Right ventricle myocardium inferior (tissue), 1 donor: ENCODE measurements at regions of chr9 and their contacts with region 1.

Region 1: DNA sequence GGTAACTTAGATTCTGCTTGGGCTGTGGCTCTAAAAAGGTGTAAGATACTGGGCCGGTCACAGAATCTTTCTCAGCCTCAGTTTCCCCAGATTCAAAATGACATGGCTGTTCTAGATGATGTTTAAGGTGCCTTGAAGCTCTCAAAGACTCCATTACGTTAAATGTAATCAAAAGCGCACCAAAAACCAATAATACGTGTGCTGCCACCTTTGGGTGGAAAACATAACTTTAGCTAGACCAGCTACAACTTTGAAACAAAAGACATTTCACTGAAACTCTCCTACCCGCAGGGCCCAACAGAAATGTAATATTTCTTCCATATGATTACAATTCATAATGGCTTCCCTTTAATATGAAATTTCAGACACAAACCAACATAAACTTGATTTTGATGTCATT is 35.0 kb upstream of the PCSK5 start:
- DNase-seq: no peak
- ATAC-seq: peak; percentile 34

Region 2: DNA sequence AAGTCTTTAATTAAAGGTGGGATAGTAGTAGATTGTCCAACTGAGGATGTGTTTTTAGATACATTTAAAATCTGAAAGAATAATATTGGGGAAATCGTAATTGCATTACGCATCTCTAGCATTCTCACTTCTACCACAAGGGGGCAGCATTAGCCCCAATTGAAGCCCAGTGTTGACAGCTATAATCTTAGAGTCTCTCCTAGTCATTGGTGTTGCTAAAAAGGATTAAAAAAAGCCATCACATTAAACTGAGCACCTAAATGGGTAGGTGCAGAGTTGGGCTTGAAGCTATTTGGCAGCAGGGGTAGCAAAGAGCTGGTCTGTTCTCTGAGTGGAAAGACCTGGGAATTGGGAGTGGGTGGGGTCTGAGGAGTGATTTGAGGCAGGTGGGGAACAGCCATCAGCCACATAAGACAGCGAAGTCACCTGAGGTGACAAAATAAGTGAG is 590.0 kb before region 1 on chr9:
- intact Hi-C with region 1: loop called (anchors 5 kb)
- DNase-seq: no peak
- ATAC-seq: no peak

Region 3: DNA sequence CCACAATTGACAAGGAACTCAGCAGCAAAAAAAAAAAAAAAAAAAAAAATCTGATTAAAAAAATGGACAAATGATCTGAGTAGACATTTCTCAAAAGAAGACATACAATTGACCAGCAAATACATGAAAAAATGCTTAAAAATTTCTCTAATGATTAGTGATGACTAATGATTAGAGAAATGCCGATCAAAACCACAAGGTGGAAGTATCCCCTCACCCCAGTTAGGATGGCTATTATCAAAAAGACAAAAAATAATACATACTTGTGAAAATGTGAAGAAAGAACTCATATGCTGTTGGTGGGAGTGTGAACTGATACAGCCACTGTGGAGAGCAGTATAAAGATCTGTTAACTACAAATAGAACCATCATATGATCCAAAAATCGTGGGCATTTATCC is 521.9 kb before region 1 on chr9:
- intact Hi-C with region 1: loop called (anchors 5 kb)
- DNase-seq: no peak
- ATAC-seq: no peak

Region 4: GRCh38 chr9:75624998-75625397 is 230.5 kb before region 1 on chr9:
- intact Hi-C with region 1: loop called (anchors 5 kb)
- DNase-seq: peak; percentile 46
- ATAC-seq: peak; percentile 39

Region 5: DNA sequence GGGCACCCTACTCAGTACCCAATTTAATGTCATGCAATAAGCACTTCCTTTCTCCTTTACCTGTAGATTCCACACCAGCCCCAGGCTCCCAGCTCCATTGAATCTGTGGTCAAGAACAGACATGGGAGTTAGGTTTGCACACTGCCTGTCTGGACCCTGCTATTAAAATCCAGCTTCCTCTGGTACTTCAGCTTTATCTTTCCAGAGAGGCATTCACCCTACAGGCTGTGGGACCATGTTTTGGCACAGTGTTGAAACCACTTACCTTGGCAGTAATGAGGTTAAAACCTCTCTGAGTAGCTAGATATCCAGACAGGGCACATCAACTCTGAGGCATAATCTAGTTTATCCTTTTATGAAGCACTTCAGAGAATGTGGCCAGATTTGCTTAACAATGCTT is 156.5 kb before region 1 on chr9:
- intact Hi-C with region 1: loop called (anchors 10 kb)
- DNase-seq: no peak
- ATAC-seq: peak; percentile 84

Region 6: GRCh38 chr9:75788006-75788634 is 67.4 kb before region 1 on chr9:
- intact Hi-C with region 1: no loop called
- DNase-seq: peak; percentile 53
- ATAC-seq: peak; percentile 83

Region 7: GRCh38 chr9:75890472-75891276 is 35.2 kb after region 1 on chr9 and contains the start of gene PCSK5:
- intact Hi-C with region 1: no loop called
- DNase-seq: peak; percentile 92
- ATAC-seq: peak; percentile 98
- total RNA-seq, gene PCSK5: 4.5 TPM

Region 8: DNA sequence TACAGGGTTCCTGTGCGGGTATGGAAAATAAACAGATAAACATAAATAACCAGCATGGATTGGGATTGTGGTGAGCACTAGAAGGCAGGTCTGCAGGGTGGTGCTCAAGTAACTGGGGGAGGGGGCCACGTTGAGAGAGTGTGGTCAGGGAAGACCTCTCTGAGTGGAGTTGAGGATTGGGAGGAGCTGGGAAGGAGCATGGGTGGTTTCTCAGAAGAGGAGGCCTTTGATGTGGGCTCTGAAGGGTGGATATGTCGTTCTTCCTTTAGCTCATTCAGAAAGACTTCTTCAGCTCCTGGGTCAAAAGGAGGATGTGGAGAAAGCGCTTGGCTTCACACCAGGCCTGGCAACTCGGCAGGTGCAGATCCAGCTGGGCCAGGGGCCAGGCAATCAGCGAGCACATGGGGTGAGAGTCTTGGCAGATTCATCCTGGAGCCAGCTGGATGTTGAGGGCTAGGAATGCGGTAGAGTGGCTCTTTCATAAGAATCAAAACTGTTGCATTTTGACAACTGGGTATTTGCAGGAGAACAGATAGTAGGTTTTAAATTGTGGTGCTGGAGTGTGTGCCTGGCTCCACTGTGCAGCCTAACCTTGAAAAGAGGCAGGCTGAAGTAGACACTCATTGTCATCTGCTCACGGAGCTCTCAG is 106.6 kb after region 1 on chr9:
- intact Hi-C with region 1: no loop called
- DNase-seq: peak; percentile 71
- ATAC-seq: peak; percentile 79

Region 9: GRCh38 chr9:76086539-76086938 is 231.0 kb after region 1 on chr9:
- intact Hi-C with region 1: no loop called
- DNase-seq: no peak
- ATAC-seq: no peak